Heart left ventricle (tissue), 16 donors: ENCODE measurements at regions of chr11 and their contacts with region 1.

Region 1: GRCh38 chr11:67118801-67119584 is at the start of gene KDM2A:
- DNase-seq: peak; percentile 99 to 100 (median 99)
- ATAC-seq: peak; percentile 93 to 95 (median 95)
- H3K4me3 ChIP-seq: peak within 1 kb of the TSS; percentile 77 to 99 (median 98)
- H3K27ac ChIP-seq: peak within 1 kb of the TSS; percentile 91 to 99 (median 98)
- H3K4me1 ChIP-seq: peaks cover 0 to 44% (median 26%) of the 10 kb centered on the region in 12 donors
- H3K27me3 ChIP-seq: no peaks in the 10 kb centered on the region
- CTCF ChIP-seq: peak in 9 of 12 donors; percentile 7 to 58 (median 50)
- POLR2A ChIP-seq: peak in 1 of 2 donors; percentile 44
- total RNA-seq, gene KDM2A: 26.7 to 66.4 (median 38.6) TPM

Region 2: GRCh38 chr11:67167086-67167485 is 48.1 kb after region 1 on chr11:
- intact Hi-C with region 1: loop called in 2 of 10 experiments (anchors 5 kb)
- DNase-seq: no peak
- ATAC-seq: no peak
- H3K4me3 ChIP-seq: no peak overlapping the region
- H3K27ac ChIP-seq: no peak overlapping the region
- H3K4me1 ChIP-seq: peaks cover 0 to 32% (median 11%) of the 10 kb centered on the region in 12 donors
- H3K27me3 ChIP-seq: no peaks in the 10 kb centered on the region
- CTCF ChIP-seq: no peak
- POLR2A ChIP-seq: no peak

Region 3: GRCh38 chr11:67230406-67230805 is 111.4 kb after region 1 on chr11:
- intact Hi-C with region 1: loop called in 1 of 10 experiments (anchors 10 kb)
- DNase-seq: no peak
- ATAC-seq: no peak
- H3K4me3 ChIP-seq: no peak overlapping the region
- H3K27ac ChIP-seq: no peak overlapping the region
- H3K4me1 ChIP-seq: no peaks in the 10 kb centered on the region
- H3K27me3 ChIP-seq: no peaks in the 10 kb centered on the region
- CTCF ChIP-seq: no peak
- POLR2A ChIP-seq: no peak

Region 4: DNA sequence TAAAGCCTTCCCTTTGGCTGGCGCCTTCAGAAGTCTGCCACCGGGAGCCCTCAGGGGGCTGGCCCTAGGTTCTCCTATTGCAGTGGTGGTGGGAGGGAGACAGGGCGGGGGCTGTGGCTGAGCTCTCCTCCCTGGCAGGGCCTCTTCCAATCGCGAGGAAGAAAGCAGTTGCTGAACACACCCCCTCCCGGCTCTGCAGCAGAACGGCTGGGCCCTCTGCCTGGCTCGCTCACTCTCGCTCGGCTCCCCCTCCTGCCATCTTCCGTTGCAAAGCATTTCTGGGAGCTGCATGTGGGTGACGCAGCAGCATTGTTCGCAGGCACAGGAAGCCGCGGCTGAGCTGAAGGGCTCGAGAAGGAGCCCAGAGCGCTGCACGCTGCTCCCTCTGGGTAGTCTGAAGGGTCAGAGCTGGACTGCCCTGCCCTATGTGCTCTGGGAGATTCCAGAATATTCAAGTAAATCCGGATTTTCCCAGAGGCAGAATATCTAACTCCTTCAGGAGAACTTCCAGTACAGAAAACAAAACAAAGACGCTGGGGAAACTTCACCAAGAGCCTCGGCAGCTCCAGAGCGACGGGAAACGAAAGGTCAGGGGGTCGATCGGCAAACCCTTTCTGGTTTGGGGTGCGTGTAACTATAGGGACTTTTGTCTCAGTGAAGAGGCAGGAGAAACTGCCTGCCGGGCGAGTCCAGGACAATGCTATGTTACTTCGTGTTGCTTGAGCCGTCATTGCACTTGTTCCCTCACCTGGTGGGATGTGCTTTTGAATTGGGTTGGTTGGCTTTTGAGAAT is 121.0 kb after region 1 on chr11:
- intact Hi-C with region 1: loop called in 2 of 10 experiments (anchors 2 kb)
- DNase-seq: peak; percentile 96 to 99 (median 98)
- ATAC-seq: peak; percentile 97 to 99 (median 98)
- H3K4me3 ChIP-seq: peak overlapping the region; percentile 38 to 95 (median 70)
- H3K27ac ChIP-seq: peak overlapping the region; percentile 87 to 98 (median 92)
- H3K4me1 ChIP-seq: peaks cover 7 to 57% (median 46%) of the 10 kb centered on the region in 12 donors
- H3K27me3 ChIP-seq: no peaks in the 10 kb centered on the region
- CTCF ChIP-seq: peak in 5 of 12 donors; percentile 4 to 34 (median 22)
- POLR2A ChIP-seq: peak in 1 of 2 donors; percentile 96